ENCODE measurements at regions of chr1 and their contacts with region 1.

Region 1: GRCh38 chr1:152347116-152347728 is 12.6 kb downstream of the FLG2 start:
- DNase-seq: peak; percentile 91
- ATAC-seq: peak; percentile 76
- H3K4me3 ChIP-seq: no peak overlapping the region
- H3K27ac ChIP-seq: no peak overlapping the region
- H3K4me1 ChIP-seq: no peaks in the 10 kb centered on the region
- H3K27me3 ChIP-seq: peaks cover 5% of the 10 kb centered on the region; the same call in 1 of the 2 replicates
- CTCF ChIP-seq: peak; percentile 95

Region 2: GRCh38 chr1:152227310-152227928 is 119.8 kb before region 1 on chr1:
- CTCF ChIA-PET with region 1: no interaction called
- POLR2A ChIA-PET with region 1: no interaction called
- intact Hi-C with region 1: loop called (anchors 5 kb)
- DNase-seq: peak; percentile 23
- ATAC-seq: peak; percentile 53
- H3K4me3 ChIP-seq: no peak overlapping the region
- H3K27ac ChIP-seq: no peak overlapping the region
- H3K4me1 ChIP-seq: no peaks in the 10 kb centered on the region
- H3K27me3 ChIP-seq: no peaks in the 10 kb centered on the region; the same call in 1 of the 2 replicates
- CTCF ChIP-seq: peak; percentile 57

Measured in PC-3 (cell line).